Thyroid gland (tissue), 4 donors: ENCODE measurements at regions of chr12 and their contacts with region 1.

Region 1: GRCh38 chr12:103956516-103957027 is 9.1 kb upstream of the TDG start:
- DNase-seq: peak; percentile 23 to 38
- H3K4me3 ChIP-seq: peak overlapping the region; percentile 52 to 72 (median 61)
- H3K27ac ChIP-seq: peak overlapping the region; percentile 50 to 94 (median 89)
- H3K4me1 ChIP-seq: peaks cover 13 to 14% of the 10 kb centered on the region in 2 donors
- H3K27me3 ChIP-seq: no peaks in the 10 kb centered on the region
- CTCF ChIP-seq: no peak
- POLR2A ChIP-seq: no peak

Region 2: DNA sequence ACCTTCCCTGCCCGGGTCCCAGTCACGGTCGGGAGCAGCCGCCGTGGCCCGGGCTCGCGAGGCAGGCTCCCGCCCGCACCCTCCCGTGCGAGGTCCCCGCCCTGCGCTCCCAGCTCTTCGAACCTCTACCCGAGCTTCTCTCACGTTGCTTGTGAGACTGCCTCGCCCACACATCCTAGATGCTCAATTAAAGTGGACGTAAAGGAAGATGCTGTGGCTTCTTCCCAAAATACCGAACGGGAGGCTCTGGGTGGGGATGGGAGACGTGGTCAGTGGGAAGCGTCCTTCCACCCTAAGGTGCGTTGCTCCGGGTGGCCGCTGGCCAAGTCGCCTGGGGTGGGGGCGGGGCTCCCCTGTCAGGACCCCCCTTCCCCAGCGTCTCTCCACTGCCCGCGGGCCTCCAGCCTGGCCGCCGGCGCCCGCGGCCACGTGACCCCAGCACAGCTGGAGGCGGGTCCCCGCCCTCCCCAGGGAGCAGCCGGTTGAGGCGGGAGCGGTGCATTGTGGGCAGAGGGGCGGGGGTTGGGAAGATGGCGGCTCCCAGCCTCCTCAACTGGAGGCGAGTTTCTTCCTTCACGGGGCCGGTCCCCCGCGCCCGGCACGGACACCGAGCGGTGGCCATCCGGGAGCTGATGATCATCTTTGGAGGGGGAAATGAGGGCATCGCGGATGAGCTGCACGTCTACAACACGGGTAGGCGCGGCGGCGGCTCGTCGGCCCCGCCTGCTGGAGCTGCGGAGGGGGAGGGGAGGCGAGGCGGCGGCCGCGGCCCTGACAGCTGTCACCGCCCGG is 107.7 kb after region 1 on chr12 and contains the start of gene HCFC2:
- intact Hi-C with region 1: loop called (anchors 10 kb)
- DNase-seq: peak; percentile 92 to 93
- H3K4me3 ChIP-seq: peak within 1 kb of the TSS; percentile 49 to 97 (median 97)
- H3K27ac ChIP-seq: peak within 1 kb of the TSS; percentile 55 to 88 (median 87)
- H3K4me1 ChIP-seq: peaks cover 14 to 17% of the 10 kb centered on the region in 2 donors
- H3K27me3 ChIP-seq: no peaks in the 10 kb centered on the region
- CTCF ChIP-seq: peak in 1 of 6 experiments; percentile 7
- POLR2A ChIP-seq: peak; percentile 4 to 74
- total RNA-seq, gene HCFC2: 23.6 to 31.6 (median 27.1) TPM